RWPE1 (cell line): ENCODE measurements at regions of chr1 and their contacts with region 1.

Region 1: GRCh38 chr1:9555942-9556341 is 16.7 kb downstream of the SLC25A33 start:
- DNase-seq: no peak
- H3K27ac ChIP-seq: peak overlapping the region; percentile 75
- CTCF ChIP-seq: no peak

Region 2: DNA sequence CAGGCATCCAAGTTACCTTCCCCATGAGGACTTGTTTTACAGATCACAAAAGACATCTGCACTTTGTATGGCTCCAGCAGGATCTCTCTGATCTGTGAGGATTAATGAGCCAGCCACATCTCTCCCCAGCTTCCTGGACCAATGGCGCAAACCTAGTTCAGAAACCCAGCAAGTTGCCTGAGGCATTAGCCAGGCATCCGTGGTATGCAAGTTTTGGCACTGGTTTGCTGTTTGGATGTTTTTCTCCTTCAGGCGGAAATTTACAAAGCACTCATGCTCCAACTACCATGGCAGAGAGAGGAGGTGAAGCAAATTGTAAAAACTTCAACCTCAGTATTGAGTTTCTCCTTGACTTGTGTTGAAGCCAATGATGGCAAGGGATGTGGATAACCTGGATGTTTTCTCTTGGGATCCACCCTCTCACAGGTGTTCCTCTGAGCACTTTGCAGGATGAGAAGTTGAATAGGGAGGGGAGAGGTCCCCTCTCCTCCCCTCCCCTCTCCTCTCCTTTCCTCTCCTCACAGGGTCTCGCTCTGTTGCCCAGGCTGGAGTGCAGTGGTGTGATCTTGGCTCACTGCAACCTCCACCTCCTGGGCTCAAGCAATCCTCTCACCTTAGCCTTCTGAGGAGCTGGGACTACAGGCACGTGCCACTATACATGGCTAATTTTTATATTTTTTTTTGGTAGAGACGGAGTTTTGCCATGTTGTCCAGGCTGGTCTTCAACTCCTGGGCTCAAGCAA is 651.9 kb before region 1 on chr1:
- CTCF ChIA-PET with region 1: no interaction called
- POLR2A ChIA-PET with region 1: interaction called, 11 read pairs
- DNase-seq: peak; percentile 85
- H3K27ac ChIP-seq: peak overlapping the region; percentile 97
- CTCF ChIP-seq: no peak

Region 3: DNA sequence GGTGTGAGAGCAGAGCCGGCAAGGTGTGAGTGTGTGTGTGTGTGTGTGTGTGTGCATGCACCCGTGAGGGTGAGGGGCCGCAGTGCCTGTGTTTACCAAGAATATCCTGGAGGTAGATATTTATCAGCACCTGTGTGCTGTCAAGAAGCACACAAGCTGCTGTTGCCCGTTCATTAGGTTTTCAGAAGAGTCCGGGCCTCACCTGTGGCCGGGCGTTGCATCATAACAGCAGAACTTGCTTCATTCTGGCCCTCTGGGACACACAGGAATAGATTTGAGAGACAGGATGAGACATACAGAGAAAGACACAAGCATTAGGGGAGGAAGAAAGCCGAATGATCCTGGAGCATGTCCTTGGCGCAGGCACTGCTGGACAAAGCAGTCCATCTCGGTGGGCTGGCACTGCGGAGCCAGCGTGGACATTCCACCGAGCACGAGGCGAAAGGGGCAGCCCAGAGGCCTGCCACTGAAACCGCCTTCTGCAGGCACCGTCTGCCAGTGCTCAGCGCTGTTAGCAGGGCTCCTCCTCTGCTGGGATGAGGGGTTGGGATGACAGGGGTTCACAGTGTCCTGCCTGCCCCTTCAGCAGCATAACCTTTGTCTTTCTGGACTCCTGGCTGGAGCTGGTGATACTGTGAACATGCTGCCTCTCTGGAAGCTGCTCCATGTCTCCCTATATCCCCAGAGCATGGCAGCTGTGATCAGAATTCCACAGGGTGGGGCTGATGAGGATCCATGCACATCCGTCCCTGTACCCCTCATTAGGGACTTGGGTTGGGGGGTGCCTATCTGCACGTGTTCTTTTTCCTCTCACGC is 999.9 kb after region 1 on chr1:
- CTCF ChIA-PET with region 1: no interaction called
- POLR2A ChIA-PET with region 1: no interaction called
- DNase-seq: peak; percentile 17
- H3K27ac ChIP-seq: peak overlapping the region; percentile 37
- CTCF ChIP-seq: no peak